Sciatic nerve (tissue), 2 donors: ENCODE measurements at regions of chr18 and their contacts with region 1.

Region 1: DNA sequence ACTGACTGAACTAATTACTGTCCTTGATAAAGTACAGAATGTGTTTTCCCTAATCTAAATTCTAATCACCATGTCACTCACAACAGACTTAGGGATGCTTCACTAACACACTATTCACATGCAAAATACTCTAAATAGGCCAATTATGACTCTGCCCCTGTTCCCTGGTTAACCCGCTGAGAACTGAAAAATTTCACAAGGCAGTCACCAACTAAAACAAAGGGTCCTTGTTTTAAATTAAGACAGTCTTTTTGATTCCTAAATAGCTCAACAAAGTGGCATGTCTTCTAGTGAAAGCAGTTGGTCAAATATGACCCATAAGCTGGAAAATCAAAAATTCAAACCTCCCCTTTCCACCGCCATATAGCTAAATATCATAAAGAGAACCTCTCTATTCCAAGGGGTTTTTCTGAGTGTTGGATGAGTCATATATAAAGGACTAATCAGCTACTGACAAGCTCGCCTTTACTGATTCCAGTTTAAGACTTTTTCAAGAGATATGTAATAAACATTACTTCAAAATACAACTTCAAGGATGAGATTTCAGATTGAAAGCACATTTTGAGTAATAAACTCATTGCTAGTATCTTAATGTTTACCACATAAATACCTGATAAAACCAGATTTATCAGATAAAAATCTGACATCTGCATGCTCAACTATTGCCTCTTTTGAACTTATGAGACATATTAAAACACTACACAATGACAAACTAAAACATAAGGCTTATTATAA is 235.8 kb downstream of the TCF4 start:
- DNase-seq: no peak
- ATAC-seq: no peak

Region 2: GRCh38 chr18:55405893-55406406 is 53.8 kb after region 1 on chr18:
- intact Hi-C with region 1: loop called (anchors 10 kb)
- DNase-seq: peak; percentile 90
- ATAC-seq: peak; percentile 88